Activated T-helper 2 cell treated with anti-CD3 and anti-CD28 coated beads, Interferon-gamma antibody, Interleukin-2, Interleukin-4, amounts not matched to agents 10 μg/mL and 5 μg/mL and 100 μg/mL, durations not matched to agents 14 hours and 24 hours and 36 hours (primary cell): ENCODE measurements at regions of chr7 and their contacts with region 1.

Region 1: GRCh38 chr7:36686499-36686898 is 37.8 kb downstream of the AOAH start:
- DNase-seq: peak; percentile 37
- H3K4me3 Mint-ChIP-seq: peak overlapping the region; percentile 49
- H3K27ac Mint-ChIP-seq: peak overlapping the region; percentile 93
- H3K4me1 Mint-ChIP-seq: peaks cover 79% of the 10 kb centered on the region
- H3K27me3 Mint-ChIP-seq: no peaks in the 10 kb centered on the region

Region 2: GRCh38 chr7:36651404-36651803 is 35.1 kb before region 1 on chr7:
- intact Hi-C with region 1: no loop called
- DNase-seq: no peak
- H3K4me3 Mint-ChIP-seq: no peak overlapping the region
- H3K27ac Mint-ChIP-seq: no peak overlapping the region
- H3K4me1 Mint-ChIP-seq: peaks cover 23% of the 10 kb centered on the region
- H3K27me3 Mint-ChIP-seq: no peaks in the 10 kb centered on the region

Region 3: GRCh38 chr7:36707465-36707864 is 21.0 kb after region 1 on chr7:
- intact Hi-C with region 1: loop called (anchors 1 kb)
- DNase-seq: no peak
- H3K4me3 Mint-ChIP-seq: peak overlapping the region; percentile 30
- H3K27ac Mint-ChIP-seq: peak overlapping the region; percentile 97
- H3K4me1 Mint-ChIP-seq: peaks cover 90% of the 10 kb centered on the region
- H3K27me3 Mint-ChIP-seq: no peaks in the 10 kb centered on the region

Region 4: DNA sequence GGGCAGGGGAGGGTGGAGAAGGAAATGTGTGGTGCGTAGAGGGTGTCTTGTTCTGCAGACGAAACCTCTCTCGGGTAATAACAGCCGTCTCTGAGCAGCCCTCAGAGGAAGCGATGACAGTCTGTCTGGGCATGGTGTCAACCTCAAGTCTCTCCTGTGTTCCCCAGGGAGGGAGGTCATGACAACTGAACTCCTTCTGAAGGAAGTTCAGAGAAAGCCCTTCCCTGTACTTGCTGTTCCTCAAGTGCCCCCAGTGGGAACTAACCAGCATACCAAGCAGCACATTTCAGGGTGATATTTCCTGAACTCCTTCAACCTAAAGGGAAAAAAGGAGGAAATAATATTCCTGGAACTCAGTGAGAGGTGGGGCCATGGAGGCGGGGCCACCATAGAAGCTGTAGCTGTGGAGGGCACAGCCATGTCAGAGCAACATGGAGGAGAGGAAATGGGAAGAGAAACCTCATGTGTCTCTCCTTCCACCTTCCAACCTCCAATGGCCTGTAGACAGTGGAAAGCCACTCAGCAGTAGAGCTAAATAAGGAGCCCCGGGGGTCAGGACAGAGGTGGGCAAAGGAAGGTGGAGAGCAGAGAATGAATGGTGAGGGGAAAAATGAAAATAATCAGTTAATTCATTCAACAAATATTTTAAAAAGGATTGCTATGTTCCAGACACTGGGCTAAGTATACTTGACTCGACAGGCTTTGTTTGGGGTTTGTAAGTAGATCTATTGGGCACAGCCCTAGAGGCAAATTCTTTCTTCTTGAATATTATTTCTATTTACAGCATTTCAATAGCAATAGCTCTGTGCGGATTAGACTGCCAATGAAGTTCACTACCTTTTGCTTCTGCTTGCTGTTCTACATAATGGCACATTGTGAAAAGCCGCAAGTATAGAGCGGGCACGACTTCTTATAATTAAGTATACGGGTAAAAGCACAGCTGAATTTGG is 98.8 kb after region 1 on chr7:
- intact Hi-C with region 1: loop called (anchors 2 kb)
- DNase-seq: peak; percentile 48
- H3K4me3 Mint-ChIP-seq: no peak overlapping the region
- H3K27ac Mint-ChIP-seq: peak overlapping the region; percentile 78
- H3K4me1 Mint-ChIP-seq: peaks cover 69% of the 10 kb centered on the region
- H3K27me3 Mint-ChIP-seq: no peaks in the 10 kb centered on the region

Region 5: DNA sequence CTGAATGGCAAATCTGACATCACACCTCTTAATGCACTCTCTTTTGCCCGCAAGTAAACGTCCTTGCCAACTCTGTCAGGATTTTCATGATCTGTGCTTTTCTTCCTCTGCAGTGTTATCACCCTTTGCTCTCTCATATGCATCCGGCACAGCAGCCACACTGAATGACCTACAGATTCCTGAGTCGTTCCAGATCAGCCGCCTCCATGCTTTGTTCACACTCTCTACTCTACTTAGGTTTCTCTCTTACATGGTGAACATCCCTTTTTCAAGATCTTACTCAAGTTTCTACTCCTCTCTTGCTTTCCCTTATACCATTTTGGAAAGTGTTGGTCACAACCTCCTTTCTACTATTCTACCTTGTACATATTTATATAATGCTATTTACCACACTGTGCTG is 165.5 kb after region 1 on chr7:
- intact Hi-C with region 1: loop called (anchors 2 kb)
- DNase-seq: no peak
- H3K4me3 Mint-ChIP-seq: no peak overlapping the region
- H3K27ac Mint-ChIP-seq: peak overlapping the region; percentile 78
- H3K4me1 Mint-ChIP-seq: peaks cover 13% of the 10 kb centered on the region
- H3K27me3 Mint-ChIP-seq: no peaks in the 10 kb centered on the region

Region 6: GRCh38 chr7:36958111-36958733 is 271.7 kb after region 1 on chr7:
- intact Hi-C with region 1: loop called (anchors 2 kb)
- DNase-seq: no peak
- H3K4me3 Mint-ChIP-seq: no peak overlapping the region
- H3K27ac Mint-ChIP-seq: no peak overlapping the region
- H3K4me1 Mint-ChIP-seq: peaks cover 28% of the 10 kb centered on the region
- H3K27me3 Mint-ChIP-seq: no peaks in the 10 kb centered on the region

Region 7: GRCh38 chr7:37065779-37066271 is 379.3 kb after region 1 on chr7:
- intact Hi-C with region 1: loop called (anchors 5 kb)
- DNase-seq: no peak
- H3K4me3 Mint-ChIP-seq: no peak overlapping the region
- H3K27ac Mint-ChIP-seq: peak overlapping the region; percentile 86
- H3K4me1 Mint-ChIP-seq: peaks cover 50% of the 10 kb centered on the region
- H3K27me3 Mint-ChIP-seq: no peaks in the 10 kb centered on the region

Region 8: GRCh38 chr7:37109843-37110242 is 423.3 kb after region 1 on chr7:
- intact Hi-C with region 1: loop called (anchors 5 kb)
- DNase-seq: no peak
- H3K4me3 Mint-ChIP-seq: no peak overlapping the region
- H3K27ac Mint-ChIP-seq: peak overlapping the region; percentile 46
- H3K4me1 Mint-ChIP-seq: peaks cover 38% of the 10 kb centered on the region
- H3K27me3 Mint-ChIP-seq: no peaks in the 10 kb centered on the region

Region 9: GRCh38 chr7:37585195-37585463 is 898.6 kb after region 1 on chr7:
- intact Hi-C with region 1: no loop called
- DNase-seq: no peak
- H3K4me3 Mint-ChIP-seq: no peak overlapping the region
- H3K27ac Mint-ChIP-seq: no peak overlapping the region
- H3K4me1 Mint-ChIP-seq: no peaks in the 10 kb centered on the region
- H3K27me3 Mint-ChIP-seq: peaks cover 11% of the 10 kb centered on the region